ENCODE measurements at regions of chr18 and their contacts with region 1.

Region 1: GRCh38 chr18:44452346-44452745 is 228.3 kb upstream of the SETBP1 start:
- DNase-seq: no peak
- ATAC-seq: no peak
- H3K4me3 ChIP-seq: no peak overlapping the region
- H3K27ac ChIP-seq: no peak overlapping the region
- H3K4me1 ChIP-seq: no peaks in the 10 kb centered on the region
- H3K27me3 ChIP-seq: no peaks in the 10 kb centered on the region

Region 2: GRCh38 chr18:43525169-43525568 is 927.2 kb before region 1 on chr18:
- intact Hi-C with region 1: no loop called
- DNase-seq: no peak
- ATAC-seq: no peak
- H3K4me3 ChIP-seq: no peak overlapping the region
- H3K27ac ChIP-seq: no peak overlapping the region
- H3K4me1 ChIP-seq: no peaks in the 10 kb centered on the region
- H3K27me3 ChIP-seq: no peaks in the 10 kb centered on the region

Region 3: DNA sequence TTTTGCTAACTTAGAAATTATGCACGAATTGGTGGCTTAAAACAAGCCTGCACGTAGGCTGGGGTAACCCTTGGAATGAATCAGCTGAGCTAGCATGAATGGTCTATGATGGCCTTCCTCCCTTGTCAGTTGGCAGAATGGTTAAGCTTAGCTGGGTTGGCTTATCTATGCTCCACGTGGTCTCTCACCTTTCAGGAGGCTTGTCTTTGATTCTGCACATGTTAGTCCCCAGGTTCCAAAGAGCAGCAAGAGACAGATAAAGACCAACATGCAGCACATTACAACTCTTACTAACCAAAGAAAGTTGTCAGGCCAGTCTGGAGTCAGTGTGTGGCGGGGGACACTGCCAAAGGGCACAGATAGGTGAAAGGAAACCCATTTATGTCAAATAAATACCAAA is 474.2 kb before region 1 on chr18:
- intact Hi-C with region 1: no loop called
- DNase-seq: no peak
- ATAC-seq: no peak
- H3K4me3 ChIP-seq: no peak overlapping the region
- H3K27ac ChIP-seq: no peak overlapping the region
- H3K4me1 ChIP-seq: no peaks in the 10 kb centered on the region
- H3K27me3 ChIP-seq: no peaks in the 10 kb centered on the region

Region 4: DNA sequence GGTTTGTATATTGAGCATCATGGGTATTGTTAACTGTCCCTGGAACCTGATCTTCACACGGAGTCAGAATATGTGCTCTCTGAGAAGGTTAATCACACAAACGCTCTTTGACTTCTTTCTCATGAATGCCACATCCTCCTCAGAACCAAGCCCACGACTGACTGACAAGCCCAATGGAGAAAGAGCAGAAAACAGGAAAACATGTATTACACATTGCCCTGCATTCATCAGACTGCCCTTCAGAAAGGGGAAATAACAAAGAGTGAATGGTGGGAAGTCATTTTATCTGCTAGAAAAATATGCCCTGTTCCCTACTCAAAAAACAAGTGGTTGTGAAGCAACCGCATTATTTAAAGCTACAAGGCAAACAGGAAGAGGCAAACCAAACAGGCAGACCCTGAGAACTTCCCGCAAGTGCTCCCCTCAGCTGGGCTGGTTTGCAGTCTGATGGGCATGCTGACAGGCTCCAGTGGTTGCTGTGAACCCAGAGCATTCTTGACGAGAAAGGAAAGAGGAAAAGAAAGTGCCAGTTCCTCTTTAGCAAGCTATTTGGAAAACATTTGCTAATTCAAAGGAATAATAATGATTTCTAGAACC is 55.5 kb after region 1 on chr18:
- intact Hi-C with region 1: loop called in 1 of 2 experiments (anchors 10 kb)
- DNase-seq: peak; percentile 74 to 85
- ATAC-seq: no peak
- H3K4me3 ChIP-seq: no peak overlapping the region
- H3K27ac ChIP-seq: no peak overlapping the region
- H3K4me1 ChIP-seq: no peaks in the 10 kb centered on the region
- H3K27me3 ChIP-seq: no peaks in the 10 kb centered on the region

Measured in aorta (tissue), 5 donors.